ENCODE measurements at regions of chr6 and their contacts with region 1.

Region 1: GRCh38 chr6:131519670-131520436 is 53.2 kb upstream of the ARG1 start:
- DNase-seq: peak; percentile 27
- H3K4me3 Mint-ChIP-seq: no peak overlapping the region
- H3K27ac Mint-ChIP-seq: no peak overlapping the region
- H3K4me1 Mint-ChIP-seq: peaks cover 14% of the 10 kb centered on the region
- H3K27me3 Mint-ChIP-seq: peaks cover 10% of the 10 kb centered on the region

Region 2: DNA sequence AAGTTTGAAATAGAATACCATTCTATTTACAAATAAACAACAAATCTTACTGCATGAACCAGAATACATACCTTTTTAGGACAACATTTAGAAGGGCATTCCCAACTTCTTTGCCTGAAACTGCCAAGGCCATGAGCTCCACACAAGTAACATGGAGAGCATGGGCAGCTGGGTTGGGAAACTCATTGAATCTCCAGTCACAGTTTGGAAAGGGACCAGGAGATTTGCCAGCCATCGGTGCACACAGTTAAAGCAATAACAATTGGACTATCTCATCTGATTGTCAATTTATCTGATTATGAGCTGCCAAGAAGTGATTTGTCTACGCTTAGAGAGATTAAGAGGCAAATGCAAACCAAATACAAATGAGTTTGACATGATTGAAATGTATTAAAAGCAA is 73.1 kb after region 1 on chr6:
- intact Hi-C with region 1: no loop called
- DNase-seq: no peak
- H3K4me3 Mint-ChIP-seq: no peak overlapping the region
- H3K27ac Mint-ChIP-seq: no peak overlapping the region
- H3K4me1 Mint-ChIP-seq: no peaks in the 10 kb centered on the region
- H3K27me3 Mint-ChIP-seq: no peaks in the 10 kb centered on the region

Region 3: GRCh38 chr6:131909408-131910218 is 389.8 kb after region 1 on chr6:
- intact Hi-C with region 1: loop called (anchors 2 kb)
- DNase-seq: peak; percentile 60
- H3K4me3 Mint-ChIP-seq: no peak overlapping the region
- H3K27ac Mint-ChIP-seq: no peak overlapping the region
- H3K4me1 Mint-ChIP-seq: peaks cover 9% of the 10 kb centered on the region
- H3K27me3 Mint-ChIP-seq: peaks cover 25% of the 10 kb centered on the region

Measured in activated T-helper 1 cell treated with anti-CD3 and anti-CD28 coated beads, Interleukin-12 subunit alpha, Interleukin-12 subunit beta, Interleukin-2, Interleukin-4 antibody, amounts not matched to agents 30 ng/mL and 10 ng/mL and 1 ng/mL, durations not matched to agents 14 hours and 24 hours and 36 hours (primary cell).